Stomach (tissue), 19 donors: ENCODE measurements at regions of chrX and their contacts with region 1.

Region 1: GRCh38 chrX:23694606-23695005 is 27.3 kb downstream of the PRDX4 start:
- DNase-seq: peak; percentile 64 to 83
- H3K4me3 ChIP-seq: no peak overlapping the region
- H3K27ac ChIP-seq: no peak overlapping the region
- H3K4me1 ChIP-seq: peaks cover 0 to 7% (median 0%) of the 10 kb centered on the region in 4 donors
- H3K27me3 ChIP-seq: no peaks in the 10 kb centered on the region
- CTCF ChIP-seq: peak in 4 of 7 experiments; percentile 9 to 56 (median 30)
- EP300 ChIP-seq: no peak
- POLR2A ChIP-seq: no peak

Region 2: GRCh38 chrX:23907498-23908218 is 213.1 kb after region 1 on chrX and contains the starts of genes APOO and CXorf58:
- intact Hi-C with region 1: loop called (anchors 10 kb)
- DNase-seq: peak; percentile 92 to 97
- H3K4me3 ChIP-seq: peak within 1 kb of the TSS; percentile 46 to 54 (median 54)
- H3K27ac ChIP-seq: peak within 1 kb of the TSS; percentile 87 to 92 (median 87)
- H3K4me1 ChIP-seq: peaks cover 0 to 19% (median 4%) of the 10 kb centered on the region in 4 donors
- H3K27me3 ChIP-seq: peaks cover 0 to 2% (median 0%) of the 10 kb centered on the region in 3 donors
- CTCF ChIP-seq: peak in 5 of 7 experiments; percentile 55 to 74 (median 71)
- EP300 ChIP-seq: no peak
- POLR2A ChIP-seq: no peak
- total RNA-seq, gene APOO: 2.0 to 22.3 (median 12.3) TPM
- total RNA-seq, gene CXorf58: not detected

Region 3: DNA sequence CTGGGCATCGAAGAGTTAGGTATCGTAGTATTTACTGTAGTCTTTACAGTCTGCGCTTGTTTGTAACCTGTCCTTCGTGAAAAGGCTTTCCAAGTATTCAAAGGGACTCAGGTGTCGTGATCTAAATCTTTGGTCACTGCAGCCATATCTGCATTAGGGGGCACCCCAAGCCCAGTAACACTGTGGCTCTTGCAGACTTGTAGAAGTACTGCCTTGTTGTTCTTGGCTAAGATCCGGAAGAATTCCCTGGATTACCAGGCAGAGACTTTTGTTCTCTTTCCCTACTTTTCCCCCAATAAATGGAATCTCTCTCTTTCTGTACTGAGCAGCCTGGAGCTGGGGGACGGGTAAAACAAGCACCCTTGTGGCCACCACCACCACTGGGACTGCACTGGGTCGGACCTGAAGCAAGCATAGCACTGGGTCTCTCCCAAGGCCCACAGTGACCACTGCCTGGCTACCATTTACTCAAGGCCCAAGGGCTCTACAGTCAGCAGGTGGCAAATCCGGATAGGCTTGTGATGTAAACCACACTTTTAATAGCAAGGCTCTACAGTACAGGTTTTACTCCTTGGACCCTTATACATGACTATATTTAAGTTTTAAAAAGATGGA is 225.2 kb after region 1 on chrX:
- intact Hi-C with region 1: no loop called
- DNase-seq: no peak
- H3K4me3 ChIP-seq: no peak overlapping the region
- H3K27ac ChIP-seq: no peak overlapping the region
- H3K4me1 ChIP-seq: no peaks in the 10 kb centered on the region
- H3K27me3 ChIP-seq: no peaks in the 10 kb centered on the region
- CTCF ChIP-seq: no peak
- EP300 ChIP-seq: no peak
- POLR2A ChIP-seq: no peak

Region 4: GRCh38 chrX:24002167-24002566 is 307.6 kb after region 1 on chrX:
- intact Hi-C with region 1: no loop called
- DNase-seq: no peak
- H3K4me3 ChIP-seq: no peak overlapping the region
- H3K27ac ChIP-seq: no peak overlapping the region
- H3K4me1 ChIP-seq: no peaks in the 10 kb centered on the region
- H3K27me3 ChIP-seq: no peaks in the 10 kb centered on the region
- CTCF ChIP-seq: no peak
- EP300 ChIP-seq: no peak
- POLR2A ChIP-seq: no peak